Activated CD8-positive, alpha-beta T cell treated with anti-CD3 and anti-CD28 coated beads, Interleukin-2, amount 10 ng/mL, durations not matched to agents 7 days and 5 days (primary cell): ENCODE measurements at regions of chr5 and their contacts with region 1.

Region 1: GRCh38 chr5:80092486-80093107 is 57.4 kb downstream of the THBS4 start:
- DNase-seq: no peak
- ATAC-seq: peak; percentile 42
- H3K4me3 Mint-ChIP-seq: peak overlapping the region; percentile 43
- H3K27ac Mint-ChIP-seq: peak overlapping the region; percentile 84
- H3K4me1 Mint-ChIP-seq: peaks cover 24% of the 10 kb centered on the region
- H3K27me3 Mint-ChIP-seq: no peaks in the 10 kb centered on the region

Region 2: GRCh38 chr5:79229357-79230174 is 863.0 kb before region 1 on chr5:
- CTCF ChIA-PET with region 1: no interaction called
- POLR2A ChIA-PET with region 1: no interaction called
- DNase-seq: peak; percentile 23
- ATAC-seq: peak; percentile 44
- H3K4me3 Mint-ChIP-seq: no peak overlapping the region
- H3K27ac Mint-ChIP-seq: no peak overlapping the region
- H3K4me1 Mint-ChIP-seq: peaks cover 8% of the 10 kb centered on the region
- H3K27me3 Mint-ChIP-seq: no peaks in the 10 kb centered on the region

Region 3: GRCh38 chr5:80033513-80033912 is 59.1 kb before region 1 on chr5:
- CTCF ChIA-PET with region 1: no interaction called
- POLR2A ChIA-PET with region 1: no interaction called
- DNase-seq: no peak
- ATAC-seq: peak; percentile 72
- H3K4me3 Mint-ChIP-seq: no peak overlapping the region
- H3K27ac Mint-ChIP-seq: no peak overlapping the region
- H3K4me1 Mint-ChIP-seq: peaks cover 24% of the 10 kb centered on the region
- H3K27me3 Mint-ChIP-seq: peaks cover 41% of the 10 kb centered on the region

Region 4: GRCh38 chr5:80055491-80056170 is 37.0 kb before region 1 on chr5:
- CTCF ChIA-PET with region 1: no interaction called
- POLR2A ChIA-PET with region 1: no interaction called
- DNase-seq: no peak
- ATAC-seq: no peak
- H3K4me3 Mint-ChIP-seq: no peak overlapping the region
- H3K27ac Mint-ChIP-seq: no peak overlapping the region
- H3K4me1 Mint-ChIP-seq: peaks cover 3% of the 10 kb centered on the region
- H3K27me3 Mint-ChIP-seq: peaks cover 6% of the 10 kb centered on the region

Region 5: GRCh38 chr5:80125962-80126480 is 33.4 kb after region 1 on chr5:
- CTCF ChIA-PET with region 1: interaction called, 20 read pairs
- POLR2A ChIA-PET with region 1: interaction called, 3 read pairs
- DNase-seq: no peak
- ATAC-seq: peak; percentile 84
- H3K4me3 Mint-ChIP-seq: peak overlapping the region; percentile 12
- H3K27ac Mint-ChIP-seq: peak overlapping the region; percentile 35
- H3K4me1 Mint-ChIP-seq: peaks cover 38% of the 10 kb centered on the region
- H3K27me3 Mint-ChIP-seq: no peaks in the 10 kb centered on the region

Region 6: DNA sequence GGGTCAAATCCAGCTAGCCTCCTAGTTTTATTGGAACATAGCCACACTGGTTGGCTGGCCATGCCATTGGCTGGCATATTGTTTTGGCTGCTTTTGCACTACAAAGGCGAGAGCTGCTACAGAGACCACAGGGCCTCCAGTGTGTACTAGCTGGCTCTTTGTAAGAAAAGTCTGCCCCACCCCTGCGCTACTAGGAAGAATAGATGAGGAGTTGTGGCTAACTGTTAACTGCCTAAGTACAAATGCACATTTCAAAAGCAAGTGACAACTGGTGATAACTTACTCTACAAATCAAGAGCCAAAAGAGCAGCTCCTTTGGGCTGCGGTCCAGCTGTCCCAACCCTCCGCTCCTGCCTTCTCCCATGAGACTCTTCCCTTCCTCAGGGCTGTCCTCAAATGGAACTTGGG is 99.4 kb after region 1 on chr5:
- CTCF ChIA-PET with region 1: interaction called, 15 read pairs
- POLR2A ChIA-PET with region 1: no interaction called
- DNase-seq: peak; percentile 78
- ATAC-seq: peak; percentile 73
- H3K4me3 Mint-ChIP-seq: peak overlapping the region; percentile 64
- H3K27ac Mint-ChIP-seq: peak overlapping the region; percentile 94
- H3K4me1 Mint-ChIP-seq: peaks cover 81% of the 10 kb centered on the region
- H3K27me3 Mint-ChIP-seq: no peaks in the 10 kb centered on the region

Region 7: GRCh38 chr5:80216753-80217596 is 124.4 kb after region 1 on chr5:
- CTCF ChIA-PET with region 1: interaction called, 11 read pairs
- POLR2A ChIA-PET with region 1: no interaction called
- DNase-seq: peak; percentile 50
- ATAC-seq: peak; percentile 41
- H3K4me3 Mint-ChIP-seq: peak overlapping the region; percentile 54
- H3K27ac Mint-ChIP-seq: peak overlapping the region; percentile 76
- H3K4me1 Mint-ChIP-seq: peaks cover 80% of the 10 kb centered on the region
- H3K27me3 Mint-ChIP-seq: no peaks in the 10 kb centered on the region

Region 8: GRCh38 chr5:80268916-80269315 is 176.3 kb after region 1 on chr5:
- CTCF ChIA-PET with region 1: interaction called, 25 read pairs
- POLR2A ChIA-PET with region 1: interaction called, 3 read pairs
- DNase-seq: no peak
- ATAC-seq: peak; percentile 35
- H3K4me3 Mint-ChIP-seq: peak overlapping the region; percentile 66
- H3K27ac Mint-ChIP-seq: peak overlapping the region; percentile 95
- H3K4me1 Mint-ChIP-seq: peaks cover 43% of the 10 kb centered on the region
- H3K27me3 Mint-ChIP-seq: no peaks in the 10 kb centered on the region

Region 9: DNA sequence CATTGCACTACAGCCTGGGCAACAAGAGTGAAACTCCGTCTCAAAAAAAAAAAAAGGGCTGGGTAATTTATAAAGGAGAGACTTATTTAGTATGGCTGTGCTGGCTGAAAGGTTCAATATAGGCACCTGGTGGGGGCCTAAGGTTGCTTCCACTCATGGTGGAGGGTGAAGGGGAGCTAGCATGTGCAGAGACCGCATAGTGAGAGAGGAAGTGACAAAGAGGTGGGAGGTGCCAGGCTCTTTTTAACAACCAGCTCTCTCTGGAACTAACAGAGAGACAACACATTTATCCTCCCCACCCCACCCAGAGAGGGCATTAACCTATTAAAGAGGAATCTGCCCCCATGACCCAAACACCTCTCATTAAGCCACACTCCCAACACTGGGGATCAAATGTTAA is 192.1 kb after region 1 on chr5:
- CTCF ChIA-PET with region 1: interaction called, 17 read pairs
- POLR2A ChIA-PET with region 1: no interaction called
- DNase-seq: peak; percentile 61
- ATAC-seq: peak; percentile 87
- H3K4me3 Mint-ChIP-seq: no peak overlapping the region
- H3K27ac Mint-ChIP-seq: peak overlapping the region; percentile 88
- H3K4me1 Mint-ChIP-seq: peaks cover 11% of the 10 kb centered on the region
- H3K27me3 Mint-ChIP-seq: no peaks in the 10 kb centered on the region